GM12878 (cell line): ENCODE measurements at regions of chr3 and their contacts with region 1.

Region 1: GRCh38 chr3:189947948-189948723 is 172.6 kb downstream of the P3H2 start:
- DNase-seq: peak; percentile 32
- ATAC-seq: peak; percentile 76
- H3K4me3 ChIP-seq: no peak overlapping the region
- H3K27ac ChIP-seq: no peak overlapping the region
- H3K4me1 ChIP-seq: peaks cover 3% of the 10 kb centered on the region; the same call in 1 of the 2 replicates
- H3K27me3 ChIP-seq: no peaks in the 10 kb centered on the region; a peak in 1 of 4 replicates
- CTCF ChIP-seq: peak; percentile 55 to 69 (median 60); a peak in 5 of 6 replicates
- EP300 ChIP-seq: no peak
- POLR2A ChIP-seq: no peak
- RAD21 ChIP-seq: peak; percentile 92

Region 2: DNA sequence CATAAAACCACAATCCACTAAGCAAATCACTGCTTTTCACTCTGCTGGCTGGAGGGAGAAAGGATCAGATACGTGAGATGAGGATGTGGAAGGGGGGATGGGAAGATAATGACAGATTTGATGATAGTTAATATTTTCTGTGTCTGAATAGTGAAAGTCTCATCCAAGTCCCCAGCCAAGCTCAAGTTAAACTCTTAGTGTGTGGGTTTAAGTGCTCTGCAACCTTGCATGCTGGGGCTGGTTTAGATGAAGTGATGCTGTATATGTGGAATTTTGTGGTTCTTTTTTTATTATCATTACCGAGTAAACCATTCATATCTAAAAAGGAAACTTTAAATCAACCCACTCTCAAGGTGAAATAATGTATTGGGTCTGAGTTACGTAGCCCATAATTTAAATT is 665.4 kb before region 1 on chr3:
- CTCF ChIA-PET with region 1: interaction called, 288 read pairs
- POLR2A ChIA-PET with region 1: no interaction called
- RAD21 ChIA-PET with region 1: interaction called, 195 read pairs
- SMC1A ChIA-PET with region 1: interaction called, 213 read pairs
- in situ Hi-C with region 1: no loop called
- intact Hi-C with region 1: no loop called
- DNase-seq: no peak
- ATAC-seq: no peak
- H3K4me3 ChIP-seq: no peak overlapping the region
- H3K27ac ChIP-seq: no peak overlapping the region
- H3K4me1 ChIP-seq: peaks cover 22% of the 10 kb centered on the region
- H3K27me3 ChIP-seq: no peaks in the 10 kb centered on the region
- CTCF ChIP-seq: no peak
- EP300 ChIP-seq: no peak
- POLR2A ChIP-seq: no peak
- RAD21 ChIP-seq: no peak

Region 3: GRCh38 chr3:189340672-189341460 is 607.3 kb before region 1 on chr3:
- CTCF ChIA-PET with region 1: interaction called, 28 read pairs
- POLR2A ChIA-PET with region 1: no interaction called
- RAD21 ChIA-PET with region 1: interaction called, 9 read pairs
- SMC1A ChIA-PET with region 1: interaction called, 27 read pairs
- in situ Hi-C with region 1: no loop called
- intact Hi-C with region 1: loop called (anchors 1 kb)
- DNase-seq: no peak
- ATAC-seq: peak; percentile 68
- H3K4me3 ChIP-seq: no peak overlapping the region
- H3K27ac ChIP-seq: no peak overlapping the region
- H3K4me1 ChIP-seq: no peaks in the 10 kb centered on the region
- H3K27me3 ChIP-seq: no peaks in the 10 kb centered on the region
- CTCF ChIP-seq: peak; percentile 44 to 47 (median 45)
- EP300 ChIP-seq: no peak
- POLR2A ChIP-seq: no peak
- RAD21 ChIP-seq: peak; percentile 49

Region 4: GRCh38 chr3:189563866-189564563 is 384.1 kb before region 1 on chr3:
- CTCF ChIA-PET with region 1: interaction called, 6 read pairs
- POLR2A ChIA-PET with region 1: no interaction called
- RAD21 ChIA-PET with region 1: interaction called, 4 read pairs
- SMC1A ChIA-PET with region 1: interaction called, 7 read pairs
- in situ Hi-C with region 1: no loop called
- intact Hi-C with region 1: loop called (anchors 10 kb)
- DNase-seq: peak; percentile 82
- ATAC-seq: peak; percentile 84
- H3K4me3 ChIP-seq: no peak overlapping the region
- H3K27ac ChIP-seq: peak overlapping the region; percentile 60
- H3K4me1 ChIP-seq: peaks cover 48% of the 10 kb centered on the region
- H3K27me3 ChIP-seq: no peaks in the 10 kb centered on the region
- CTCF ChIP-seq: 0 out of 6 replicates have a peak, but pooled peaks of 2 of the 3 experiments have one; percentile 3 to 5
- EP300 ChIP-seq: peak; percentile 43 to 51; a peak in 2 of 4 replicates
- POLR2A ChIP-seq: no peak
- RAD21 ChIP-seq: peak; percentile 34; the same call in 1 of the 2 replicates

Region 5: GRCh38 chr3:189685854-189686253 is 262.3 kb before region 1 on chr3:
- CTCF ChIA-PET with region 1: interaction called, 13 read pairs
- POLR2A ChIA-PET with region 1: no interaction called
- RAD21 ChIA-PET with region 1: interaction called, 6 read pairs
- SMC1A ChIA-PET with region 1: interaction called, 5 read pairs
- in situ Hi-C with region 1: no loop called
- intact Hi-C with region 1: loop called (anchors 5 kb)
- DNase-seq: no peak
- ATAC-seq: no peak
- H3K4me3 ChIP-seq: no peak overlapping the region
- H3K27ac ChIP-seq: no peak overlapping the region
- H3K4me1 ChIP-seq: no peaks in the 10 kb centered on the region
- H3K27me3 ChIP-seq: no peaks in the 10 kb centered on the region
- CTCF ChIP-seq: no peak
- EP300 ChIP-seq: no peak
- POLR2A ChIP-seq: no peak
- RAD21 ChIP-seq: no peak